ENCODE measurements at regions of chr1 and their contacts with region 1.

Region 1: DNA sequence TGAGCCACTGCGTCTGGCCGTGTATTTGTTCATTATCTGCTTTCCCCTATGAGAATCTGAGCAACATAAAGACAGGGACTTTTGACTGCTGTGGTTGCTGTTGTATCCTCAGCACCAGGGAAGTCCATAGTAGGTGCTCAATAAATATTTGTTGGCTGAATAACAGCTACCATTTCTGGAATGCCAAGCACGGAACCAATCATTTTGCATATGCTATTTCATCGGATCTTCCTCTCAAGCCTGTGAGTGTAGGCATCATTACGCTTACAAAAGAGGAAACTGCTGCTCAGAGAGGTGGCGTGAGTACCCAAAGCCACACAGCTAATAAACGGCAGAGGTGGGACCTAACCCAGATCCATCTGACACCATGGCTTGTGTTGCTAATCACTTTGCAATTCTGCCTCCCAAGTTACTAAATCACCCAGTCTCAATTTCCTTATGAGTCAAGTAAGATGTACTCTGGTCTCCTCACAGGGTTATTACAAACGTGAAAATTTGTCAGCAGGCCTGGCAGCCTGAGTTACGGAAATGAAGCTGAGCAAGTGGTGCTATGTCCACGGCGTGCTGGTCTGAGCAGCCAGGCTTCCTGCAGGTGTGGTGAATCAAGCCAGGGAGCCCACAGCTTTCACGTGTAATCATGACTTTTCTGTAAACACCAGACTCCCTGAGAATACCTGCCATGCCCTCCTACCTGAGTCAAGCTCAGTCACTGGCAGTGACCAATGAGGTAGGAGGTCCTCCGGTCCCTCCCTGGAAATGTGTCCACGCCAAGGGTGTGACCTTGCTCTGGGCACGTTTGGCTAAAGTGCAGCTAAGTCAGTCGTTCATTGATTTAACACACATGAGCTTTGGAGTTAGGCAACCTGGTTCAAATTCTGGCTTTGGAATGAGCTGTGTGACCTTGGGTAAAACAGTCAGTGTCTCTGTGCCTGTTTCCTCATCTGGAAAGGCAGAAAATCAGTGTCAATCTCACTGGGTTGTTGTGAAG is 4.8 kb upstream of the RHCE start:
- DNase-seq: no peak
- CTCF ChIP-seq: no peak

Region 2: GRCh38 chr1:25819576-25820246 is 394.3 kb after region 1 on chr1 and contains the start of gene MTFR1L:
- in situ Hi-C with region 1: loop called (anchors 25 kb)
- DNase-seq: peak; percentile 99
- CTCF ChIP-seq: no peak

Measured in GM13976 (cell line).